Testis (tissue), 5 donors: ENCODE measurements at regions of chr7 and their contacts with region 1.

Region 1: GRCh38 chr7:44986218-44987053 is 7.6 kb upstream of the MYO1G start:
- DNase-seq: peak; percentile 94
- H3K4me3 ChIP-seq: peak overlapping the region; percentile 54 to 56
- H3K27ac ChIP-seq: peak overlapping the region; percentile 79 to 90
- H3K4me1 ChIP-seq: peaks cover 37% of the 10 kb centered on the region
- H3K27me3 ChIP-seq: no peaks in the 10 kb centered on the region
- CTCF ChIP-seq: no peak
- POLR2A ChIP-seq: peak; percentile 81

Region 2: DNA sequence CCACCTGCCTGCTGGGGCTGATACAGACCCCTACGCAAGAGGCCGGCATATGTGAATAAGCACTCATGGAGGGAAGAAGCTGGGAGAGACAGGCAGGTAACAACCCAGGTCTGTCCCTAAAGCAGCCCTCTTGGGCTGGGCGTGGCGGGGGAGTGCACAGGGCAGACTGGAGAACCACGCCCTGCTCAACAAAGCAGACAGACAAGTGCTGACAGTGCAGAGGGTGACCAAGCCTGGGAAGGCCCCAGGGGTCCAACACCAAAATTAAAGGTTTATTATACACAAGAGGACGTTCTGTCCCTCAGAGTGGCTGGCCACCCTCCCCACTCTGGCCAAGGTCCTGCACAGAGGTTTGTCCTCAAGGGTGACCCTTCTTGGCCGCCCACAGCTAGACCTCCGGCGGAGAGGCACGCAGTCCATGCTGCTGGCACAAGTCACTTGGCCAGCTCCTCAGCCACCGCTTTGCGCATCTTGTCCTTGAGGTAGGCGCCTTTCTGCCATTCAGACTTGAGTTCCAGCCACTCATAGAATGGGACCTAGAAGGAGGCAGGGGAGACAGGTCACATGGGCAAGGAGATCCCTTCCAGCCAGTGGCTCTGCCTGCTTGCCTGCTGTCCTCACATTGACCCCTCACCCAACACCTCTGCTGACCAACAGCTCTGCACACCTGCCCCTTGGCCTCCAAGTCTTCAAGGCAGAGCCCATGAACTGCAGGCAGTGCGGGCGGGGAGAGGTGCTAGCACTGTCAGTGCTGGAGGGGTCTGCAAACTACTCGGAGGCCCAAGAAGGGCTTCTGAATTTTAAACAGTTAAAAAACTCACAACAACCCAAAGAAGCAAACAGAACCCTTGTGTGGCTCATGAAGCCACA is 113.7 kb after region 1 on chr7:
- intact Hi-C with region 1: loop called (anchors 10 kb)
- DNase-seq: no peak
- H3K4me3 ChIP-seq: no peak overlapping the region
- H3K27ac ChIP-seq: no peak overlapping the region
- H3K4me1 ChIP-seq: no peaks in the 10 kb centered on the region
- H3K27me3 ChIP-seq: no peaks in the 10 kb centered on the region
- CTCF ChIP-seq: no peak
- POLR2A ChIP-seq: no peak